ENCODE measurements at regions of chr13 and their contacts with region 1.

Region 1: GRCh38 chr13:30114571-30115256 is 192.6 kb downstream of the KATNAL1 start:
- DNase-seq: peak; percentile 90
- H3K4me3 ChIP-seq: peak overlapping the region; percentile 72 to 77
- H3K27ac ChIP-seq: peak overlapping the region in 1 of 2 experiments; percentile 53; a peak in 1 of 4 replicates
- H3K4me1 ChIP-seq: peaks cover 10 to 22% of the 10 kb centered on the region in 2 experiments; a peak in 3 of 4 replicates
- H3K27me3 ChIP-seq: no peaks in the 10 kb centered on the region
- CTCF ChIP-seq: peak; percentile 93
- EP300 ChIP-seq: no peak
- RAD21 ChIP-seq: peak; percentile 83

Region 2: GRCh38 chr13:29771247-29771646 is 343.5 kb before region 1 on chr13:
- CTCF ChIA-PET with region 1: interaction called, 164 read pairs
- POLR2A ChIA-PET with region 1: no interaction called
- DNase-seq: peak; percentile 16
- H3K4me3 ChIP-seq: no peak overlapping the region
- H3K27ac ChIP-seq: no peak overlapping the region
- H3K4me1 ChIP-seq: no peaks in the 10 kb centered on the region; a peak in 1 of 4 replicates
- H3K27me3 ChIP-seq: no peaks in the 10 kb centered on the region
- CTCF ChIP-seq: peak; percentile 72
- EP300 ChIP-seq: no peak
- RAD21 ChIP-seq: peak; percentile 70

Region 3: DNA sequence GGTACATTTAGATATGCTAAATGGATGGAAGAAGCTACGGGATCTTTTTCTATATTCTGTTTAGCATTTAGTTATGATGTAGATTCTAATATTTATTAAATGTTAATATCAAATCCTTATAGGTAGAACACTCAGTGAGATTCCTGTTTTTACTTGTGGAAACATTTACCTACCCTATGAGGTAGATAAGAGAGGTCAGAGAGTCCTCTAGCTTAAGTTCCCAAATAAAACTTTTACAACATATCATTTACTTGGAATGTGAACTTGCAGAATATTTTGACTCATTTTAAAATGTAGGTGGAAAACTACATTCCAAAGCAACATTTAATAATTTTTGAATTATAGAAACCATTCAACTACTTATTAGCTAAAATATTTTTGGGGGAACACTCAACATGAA is 328.0 kb before region 1 on chr13:
- CTCF ChIA-PET with region 1: interaction called, 13 read pairs
- POLR2A ChIA-PET with region 1: no interaction called
- DNase-seq: no peak
- H3K4me3 ChIP-seq: no peak overlapping the region
- H3K27ac ChIP-seq: no peak overlapping the region
- H3K4me1 ChIP-seq: no peaks in the 10 kb centered on the region; a peak in 2 of 4 replicates
- H3K27me3 ChIP-seq: no peaks in the 10 kb centered on the region
- CTCF ChIP-seq: no peak
- EP300 ChIP-seq: no peak
- RAD21 ChIP-seq: no peak

Region 4: DNA sequence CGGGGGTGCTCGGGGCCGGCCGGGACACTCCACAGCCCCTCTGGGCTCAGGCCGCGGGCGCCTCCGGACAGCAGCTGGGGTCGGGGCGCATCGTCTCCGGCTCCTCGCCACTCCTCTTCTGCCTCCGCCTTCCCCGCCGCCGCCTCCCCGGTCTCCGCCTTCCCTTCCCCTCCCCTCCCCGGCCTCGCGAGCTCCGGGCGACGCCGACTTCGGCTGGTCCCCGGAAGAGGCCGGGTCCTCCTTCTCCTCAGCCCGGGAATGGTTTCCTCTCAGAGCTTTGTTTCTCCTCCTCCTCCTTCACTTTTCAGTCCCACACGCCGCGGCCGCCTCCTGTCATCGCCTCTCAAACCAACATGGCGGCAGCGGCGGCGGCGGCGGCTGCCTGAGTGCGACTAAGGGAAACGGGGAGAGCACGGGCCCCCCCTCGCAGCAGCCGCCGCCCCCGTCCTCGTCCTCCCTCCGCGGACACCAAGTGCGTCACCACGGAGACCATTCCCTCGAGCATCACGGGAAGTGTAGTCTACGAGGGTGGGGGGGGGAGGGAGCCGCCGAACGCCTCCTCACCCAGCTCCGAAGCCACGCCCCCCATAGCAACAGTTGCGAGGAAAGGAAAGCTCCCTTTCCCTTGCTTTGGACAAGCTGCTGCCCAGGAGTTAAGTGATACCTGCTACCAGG is 264.4 kb before region 1 on chr13 and contains the start of gene UBL3:
- CTCF ChIA-PET with region 1: interaction called, 193 read pairs
- POLR2A ChIA-PET with region 1: interaction called, 6 read pairs
- DNase-seq: peak; percentile 97
- H3K4me3 ChIP-seq: peak within 1 kb of the TSS; percentile 73 to 97
- H3K27ac ChIP-seq: peak within 1 kb of the TSS; percentile 96
- H3K4me1 ChIP-seq: peaks cover 11 to 24% of the 10 kb centered on the region in 2 experiments; a peak in 3 of 4 replicates
- H3K27me3 ChIP-seq: no peaks in the 10 kb centered on the region
- CTCF ChIP-seq: no peak
- EP300 ChIP-seq: no peak
- RAD21 ChIP-seq: no peak
- polyA plus RNA-seq, gene UBL3: 5.8 and 7.4 TPM in 2 replicates

Region 5: DNA sequence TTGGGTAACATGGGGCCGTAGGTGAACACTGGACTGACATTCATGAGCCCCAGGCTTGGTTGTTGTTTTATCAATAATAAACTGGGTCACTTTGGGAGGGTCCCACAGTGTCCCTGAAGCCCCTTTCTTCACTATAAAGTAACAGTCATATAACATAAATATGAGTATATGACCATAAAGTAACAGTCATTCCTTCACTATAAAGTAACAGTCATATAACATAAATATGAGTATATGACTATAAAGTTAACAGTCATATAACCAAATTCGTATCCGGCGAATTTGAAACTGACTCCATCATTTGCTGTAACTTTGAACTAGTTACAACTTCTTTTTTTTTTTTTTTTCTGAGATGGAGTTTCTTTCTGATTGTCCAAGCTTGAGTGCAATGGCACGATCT is 17.6 kb before region 1 on chr13:
- CTCF ChIA-PET with region 1: interaction called, 40 read pairs
- POLR2A ChIA-PET with region 1: no interaction called
- DNase-seq: no peak
- H3K4me3 ChIP-seq: no peak overlapping the region
- H3K27ac ChIP-seq: no peak overlapping the region
- H3K4me1 ChIP-seq: no peaks in the 10 kb centered on the region
- H3K27me3 ChIP-seq: no peaks in the 10 kb centered on the region
- CTCF ChIP-seq: no peak
- EP300 ChIP-seq: no peak
- RAD21 ChIP-seq: no peak

Region 6: DNA sequence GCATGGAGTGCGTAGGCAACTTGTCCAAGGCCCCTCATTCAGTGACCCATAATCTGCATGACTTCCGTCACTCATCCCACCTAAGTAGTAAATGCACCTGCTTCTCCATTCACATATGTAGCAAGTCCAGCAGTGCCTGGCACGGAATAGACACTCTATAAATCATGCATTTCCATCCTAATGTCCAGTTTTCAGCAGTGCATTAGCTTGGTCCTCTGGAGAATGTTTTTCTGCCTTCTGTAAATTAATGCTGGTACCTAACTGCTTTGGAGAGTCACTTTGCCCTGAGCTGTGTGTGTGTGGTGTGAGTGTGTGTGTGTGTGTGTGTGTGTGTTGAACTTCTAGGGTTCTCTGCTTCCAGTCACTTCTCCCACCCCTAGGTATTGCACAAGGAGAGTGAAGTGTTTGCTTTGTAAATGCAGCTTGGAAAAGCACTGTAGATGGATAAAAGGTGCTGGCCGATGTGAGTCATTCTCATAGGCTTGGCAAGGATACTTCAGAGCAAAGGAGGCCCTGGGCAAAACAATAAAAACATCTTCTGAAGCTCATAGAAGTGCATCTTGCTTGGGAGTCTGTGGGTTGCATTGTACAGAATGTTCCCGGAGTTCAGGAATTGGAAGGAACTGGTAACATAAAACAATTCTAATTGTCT is 10.8 kb after region 1 on chr13:
- CTCF ChIA-PET with region 1: interaction called, 42 read pairs
- POLR2A ChIA-PET with region 1: no interaction called
- DNase-seq: no peak
- H3K4me3 ChIP-seq: no peak overlapping the region
- H3K27ac ChIP-seq: no peak overlapping the region
- H3K4me1 ChIP-seq: no peaks in the 10 kb centered on the region; a peak in 2 of 4 replicates
- H3K27me3 ChIP-seq: no peaks in the 10 kb centered on the region
- CTCF ChIP-seq: no peak
- EP300 ChIP-seq: no peak
- RAD21 ChIP-seq: no peak

Measured in SK-N-SH (cell line).